Sigmoid colon (tissue), 7 donors: ENCODE measurements at regions of chr3 and their contacts with region 1.

Region 1: DNA sequence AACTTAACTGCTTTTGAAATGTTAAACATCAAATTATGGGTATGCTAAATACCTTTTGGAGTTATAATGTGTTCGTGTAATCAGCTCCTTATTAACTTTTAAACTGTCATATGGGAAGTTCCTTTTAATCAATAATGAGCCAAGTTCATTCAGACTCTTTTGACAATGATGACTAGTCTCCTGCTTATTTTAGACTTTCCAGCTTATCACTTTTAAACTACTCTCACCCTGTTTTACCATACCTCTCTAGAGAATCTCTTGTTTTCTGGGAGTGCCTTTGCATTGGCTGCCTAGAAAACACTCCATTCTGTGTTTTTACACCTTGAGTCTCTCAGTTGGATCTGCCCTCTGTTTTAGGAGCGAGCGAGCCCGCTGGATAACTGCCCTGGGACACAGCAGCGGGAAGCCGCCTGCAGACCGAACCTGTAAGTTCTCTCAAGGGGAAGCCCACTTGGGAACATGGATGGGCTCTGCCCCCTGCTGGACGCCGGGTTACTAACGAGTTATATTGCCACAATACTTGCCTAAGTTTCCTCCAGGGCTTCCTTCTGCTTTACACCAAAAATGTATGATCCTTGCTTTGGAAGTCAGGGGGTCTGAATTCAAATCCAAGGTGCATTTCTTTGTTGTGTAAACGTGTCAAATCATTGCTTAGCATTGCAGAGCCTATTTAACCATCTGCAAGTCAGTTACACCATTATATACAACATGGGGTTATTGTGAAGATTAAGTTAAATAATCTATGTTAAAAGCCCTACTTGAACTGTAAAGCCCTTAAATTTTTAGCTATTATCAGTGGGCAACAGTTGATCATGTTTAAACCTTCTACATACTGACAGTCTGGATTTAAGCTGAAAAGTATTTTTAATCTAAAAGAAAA is 71.3 kb downstream of the DHX36 start:
- DNase-seq: peak; percentile 96
- H3K4me3 ChIP-seq: no peak overlapping the region
- H3K27ac ChIP-seq: peak overlapping the region in 3 of 4 donors; percentile 17 to 44 (median 29)
- H3K4me1 ChIP-seq: peaks cover 0 to 25% (median 19%) of the 10 kb centered on the region in 4 donors
- H3K27me3 ChIP-seq: no peaks in the 10 kb centered on the region
- CTCF ChIP-seq: peak; percentile 90 to 94 (median 92)
- EP300 ChIP-seq: no peak
- POLR2A ChIP-seq: no peak

Region 2: GRCh38 chr3:154095832-154096421 is 157.1 kb before region 1 on chr3:
- intact Hi-C with region 1: loop called (anchors 1 kb)
- DNase-seq: no peak
- H3K4me3 ChIP-seq: no peak overlapping the region
- H3K27ac ChIP-seq: peak overlapping the region in 2 of 4 donors; percentile 1 to 70
- H3K4me1 ChIP-seq: peaks cover 0 to 43% (median 17%) of the 10 kb centered on the region in 4 donors
- H3K27me3 ChIP-seq: no peaks in the 10 kb centered on the region
- CTCF ChIP-seq: peak in 2 of 4 experiments; percentile 45 to 51
- EP300 ChIP-seq: no peak
- POLR2A ChIP-seq: no peak

Region 3: GRCh38 chr3:154144825-154145465 is 108.1 kb before region 1 on chr3:
- intact Hi-C with region 1: no loop called
- DNase-seq: no peak
- H3K4me3 ChIP-seq: no peak overlapping the region
- H3K27ac ChIP-seq: peak overlapping the region in 1 of 4 donors; percentile 30
- H3K4me1 ChIP-seq: peaks cover 0 to 73% (median 27%) of the 10 kb centered on the region in 4 donors
- H3K27me3 ChIP-seq: no peaks in the 10 kb centered on the region
- CTCF ChIP-seq: no peak
- EP300 ChIP-seq: no peak
- POLR2A ChIP-seq: no peak

Region 4: GRCh38 chr3:154384479-154384878 is 131.5 kb after region 1 on chr3:
- intact Hi-C with region 1: no loop called
- DNase-seq: no peak
- H3K4me3 ChIP-seq: no peak overlapping the region
- H3K27ac ChIP-seq: no peak overlapping the region
- H3K4me1 ChIP-seq: no peaks in the 10 kb centered on the region
- H3K27me3 ChIP-seq: no peaks in the 10 kb centered on the region
- CTCF ChIP-seq: no peak
- EP300 ChIP-seq: no peak
- POLR2A ChIP-seq: no peak